Activated T-helper 1 cell treated with anti-CD3 and anti-CD28 coated beads, Interleukin-12 subunit alpha, Interleukin-12 subunit beta, Interleukin-2, Interleukin-4 antibody, amounts not matched to agents 30 ng/mL and 10 ng/mL and 1 ng/mL, durations not matched to agents 14 hours and 24 hours and 36 hours (primary cell): ENCODE measurements at regions of chr15 and their contacts with region 1.

Region 1: DNA sequence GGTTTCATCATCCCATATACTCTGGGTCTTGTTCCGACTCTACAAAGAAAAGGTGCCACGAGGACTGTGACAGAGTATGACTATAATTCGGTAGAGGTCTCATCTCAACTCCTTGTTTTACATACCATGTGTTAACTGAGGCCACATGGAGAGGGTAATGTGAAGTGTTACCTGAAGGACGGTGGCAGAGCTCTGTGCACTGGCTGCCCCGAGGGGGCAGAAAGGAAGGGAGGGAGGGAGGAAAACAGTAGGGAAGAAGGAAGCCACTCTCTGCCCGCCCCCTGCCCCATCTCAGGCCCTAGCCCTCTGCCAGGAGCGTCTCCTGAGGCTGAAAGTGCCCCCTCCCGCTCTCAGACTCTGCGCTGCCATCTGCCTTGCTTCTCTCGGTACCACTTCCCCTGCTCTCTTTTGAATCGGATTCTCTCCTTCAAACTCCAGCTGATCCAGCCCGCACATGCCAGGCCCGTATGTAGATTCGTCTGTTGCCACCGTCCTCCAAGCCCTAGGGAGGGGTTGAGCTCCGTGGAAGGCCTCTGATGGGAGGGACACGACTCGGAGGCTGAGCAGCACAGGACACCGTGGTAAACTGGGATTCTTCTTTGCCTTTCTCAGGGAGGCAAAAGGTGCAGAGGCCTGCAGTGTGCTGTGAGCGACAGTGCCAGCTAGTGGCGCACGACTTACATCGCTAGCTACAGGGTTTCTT is 70.5 kb upstream of the ATP10A start:
- DNase-seq: peak; percentile 51
- H3K4me3 Mint-ChIP-seq: peak overlapping the region; percentile 83
- H3K27ac Mint-ChIP-seq: peak overlapping the region; percentile 67
- H3K4me1 Mint-ChIP-seq: peaks cover 10% of the 10 kb centered on the region
- H3K27me3 Mint-ChIP-seq: peaks cover 7% of the 10 kb centered on the region

Region 2: GRCh38 chr15:25693321-25694237 is 240.0 kb before region 1 on chr15:
- intact Hi-C with region 1: loop called (anchors 1 kb)
- DNase-seq: peak; percentile 5
- H3K4me3 Mint-ChIP-seq: no peak overlapping the region
- H3K27ac Mint-ChIP-seq: no peak overlapping the region
- H3K4me1 Mint-ChIP-seq: no peaks in the 10 kb centered on the region
- H3K27me3 Mint-ChIP-seq: no peaks in the 10 kb centered on the region

Region 3: GRCh38 chr15:25739687-25740121 is 193.9 kb before region 1 on chr15:
- intact Hi-C with region 1: loop called (anchors 1 kb)
- DNase-seq: no peak
- H3K4me3 Mint-ChIP-seq: no peak overlapping the region
- H3K27ac Mint-ChIP-seq: no peak overlapping the region
- H3K4me1 Mint-ChIP-seq: peaks cover 14% of the 10 kb centered on the region
- H3K27me3 Mint-ChIP-seq: no peaks in the 10 kb centered on the region

Region 4: DNA sequence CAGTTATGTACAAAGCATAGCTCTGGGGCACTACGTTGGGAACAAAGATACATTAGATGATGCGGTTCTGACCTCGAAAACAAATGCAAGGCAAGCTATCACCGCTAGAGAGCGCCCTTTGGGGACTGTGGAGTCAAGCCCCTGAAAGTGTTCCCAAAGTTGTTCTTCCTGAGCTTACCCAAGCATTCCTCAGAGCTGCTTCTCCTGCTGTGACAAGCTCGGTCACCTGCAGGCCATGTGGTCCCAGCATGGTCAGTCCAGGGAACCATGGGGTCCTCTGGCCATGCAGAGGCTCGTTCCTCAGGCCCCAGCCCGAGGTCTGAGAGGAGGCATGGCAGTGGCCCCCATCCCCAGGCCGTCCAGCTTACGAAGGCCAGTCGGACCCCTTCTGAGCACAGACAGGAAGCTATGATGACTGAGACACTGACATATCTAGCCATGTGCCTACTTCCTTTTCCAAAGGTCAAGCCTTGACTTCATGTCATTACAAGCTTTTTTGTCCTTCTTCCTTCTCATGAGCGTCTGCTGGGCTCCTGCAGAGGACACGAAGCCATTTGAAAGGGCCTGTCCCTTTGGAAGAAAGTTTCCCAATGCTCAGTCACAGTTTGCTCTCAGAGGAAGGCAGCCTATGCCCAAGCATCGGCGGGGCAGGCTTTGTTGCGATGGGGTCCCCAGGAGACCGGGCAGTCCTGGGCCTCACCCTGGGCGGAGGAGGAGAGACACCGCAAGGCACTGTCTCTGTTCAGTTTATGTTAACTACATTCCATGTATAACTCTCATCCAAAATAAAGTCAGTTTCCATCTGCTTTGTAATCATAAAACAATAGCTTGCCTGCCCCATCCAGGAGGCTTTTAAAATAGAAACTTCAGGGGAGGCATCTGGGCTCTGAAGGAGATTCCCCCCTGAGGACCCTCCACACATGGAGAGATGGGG is 149.7 kb before region 1 on chr15:
- intact Hi-C with region 1: loop called (anchors 2 kb)
- DNase-seq: peak; percentile 14
- H3K4me3 Mint-ChIP-seq: no peak overlapping the region
- H3K27ac Mint-ChIP-seq: peak overlapping the region; percentile 68
- H3K4me1 Mint-ChIP-seq: peaks cover 34% of the 10 kb centered on the region
- H3K27me3 Mint-ChIP-seq: no peaks in the 10 kb centered on the region

Region 5: DNA sequence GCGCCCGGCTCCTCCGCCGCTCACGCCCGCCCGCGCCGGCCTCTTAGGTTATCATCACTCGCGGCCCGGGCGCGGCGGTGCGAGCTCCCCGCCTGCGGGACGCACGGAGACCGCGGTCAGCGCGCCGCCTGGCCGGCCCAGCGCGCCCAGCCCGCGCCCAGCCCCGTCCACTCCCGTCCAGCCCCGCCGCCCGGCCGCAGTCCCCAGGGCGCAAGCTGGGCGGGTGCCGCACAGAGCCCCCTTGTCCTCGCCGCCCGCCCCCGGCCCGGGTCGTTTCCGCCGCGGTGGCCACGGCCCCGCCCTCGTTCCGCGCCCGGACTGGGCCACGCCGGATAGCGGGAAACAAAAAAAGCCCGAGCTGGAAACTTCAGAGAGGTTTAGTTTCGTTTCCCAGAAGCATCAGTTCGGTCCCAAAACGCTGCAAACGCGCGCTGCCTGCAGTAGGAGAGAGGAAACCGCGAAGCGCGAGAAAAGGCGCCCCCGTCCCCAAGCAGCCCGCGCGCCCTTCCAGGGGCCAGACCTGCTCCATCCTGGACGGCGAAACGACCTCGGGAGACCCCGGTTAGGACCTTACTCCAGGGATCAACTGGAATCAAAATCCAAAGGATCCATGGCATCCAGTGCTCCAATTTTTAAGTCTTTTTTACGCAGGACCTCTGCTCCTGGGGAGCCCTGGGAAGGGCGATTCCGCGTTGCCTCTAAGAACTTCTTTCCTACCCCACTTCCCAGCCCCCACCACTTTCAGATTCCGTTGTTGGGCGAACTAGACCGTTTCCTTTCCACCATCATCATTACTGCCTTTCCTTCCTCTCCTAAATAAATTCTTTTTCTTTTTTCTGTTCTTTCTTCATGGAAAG is 70.3 kb before region 1 on chr15 and contains the start of gene ATP10A:
- intact Hi-C with region 1: loop called (anchors 5 kb)
- DNase-seq: peak; percentile 68
- H3K4me3 Mint-ChIP-seq: peak within 1 kb of the TSS; percentile 95
- H3K27ac Mint-ChIP-seq: peak within 1 kb of the TSS; percentile 91
- H3K4me1 Mint-ChIP-seq: peaks cover 52% of the 10 kb centered on the region
- H3K27me3 Mint-ChIP-seq: peaks cover 9% of the 10 kb centered on the region
- total RNA-seq, gene ATP10A: 42.8 and 47.9 TPM in 2 replicates

Region 6: DNA sequence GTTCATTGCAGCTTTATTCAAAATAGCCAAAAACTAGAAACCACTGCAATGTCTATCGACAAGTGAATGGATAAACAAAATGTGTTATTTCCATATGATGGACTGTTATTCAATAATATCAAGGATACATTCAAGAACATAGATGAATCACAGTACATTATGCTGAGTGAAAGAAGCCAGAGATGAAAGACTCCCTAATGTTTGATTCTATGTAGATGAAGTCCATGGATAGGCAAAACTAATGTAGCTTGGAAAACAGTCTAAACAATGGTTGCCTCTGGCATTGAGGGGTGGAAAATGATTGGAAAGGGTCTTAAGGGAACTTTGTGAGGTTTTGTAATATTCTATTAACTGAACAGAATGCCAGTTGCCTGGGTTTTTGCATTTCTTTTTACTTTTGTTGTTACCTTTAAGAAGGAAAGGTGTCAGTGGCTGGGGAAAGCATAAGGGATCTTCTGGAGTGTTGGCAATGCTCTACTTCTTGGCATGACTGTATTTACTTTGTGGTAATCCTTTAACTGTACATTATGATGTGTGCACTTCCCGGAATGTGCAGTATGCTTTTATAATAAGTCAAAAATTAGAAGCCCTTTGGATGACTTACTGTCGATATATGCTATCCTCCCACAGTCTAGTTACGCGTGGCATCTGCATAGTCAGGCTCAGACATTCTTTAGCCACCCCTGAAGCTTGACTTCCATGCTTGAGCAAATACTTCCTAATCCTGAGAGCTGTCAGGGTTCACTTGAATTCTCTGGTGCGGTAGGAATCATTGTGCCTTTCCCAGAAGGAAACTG is 49.9 kb before region 1 on chr15:
- intact Hi-C with region 1: loop called (anchors 5 kb)
- DNase-seq: no peak
- H3K4me3 Mint-ChIP-seq: no peak overlapping the region
- H3K27ac Mint-ChIP-seq: no peak overlapping the region
- H3K4me1 Mint-ChIP-seq: no peaks in the 10 kb centered on the region
- H3K27me3 Mint-ChIP-seq: peaks cover 10% of the 10 kb centered on the region